Cardiac septum (tissue), 1 donor: ENCODE measurements at regions of chr12 and their contacts with region 1.

Region 1: GRCh38 chr12:131928711-131929580 is at the start of gene PUS1:
- DNase-seq: peak; percentile 97
- total RNA-seq, gene PUS1: 9.9 TPM

Region 2: GRCh38 chr12:131218026-131218922 is 710.7 kb before region 1 on chr12:
- intact Hi-C with region 1: no loop called
- DNase-seq: peak; percentile 70

Region 3: GRCh38 chr12:131840481-131841416 is 88.2 kb before region 1 on chr12:
- intact Hi-C with region 1: no loop called
- DNase-seq: no peak

Region 4: GRCh38 chr12:131912518-131913294 is 16.2 kb before region 1 on chr12:
- intact Hi-C with region 1: loop called (anchors 2 kb)
- DNase-seq: peak; percentile 95

Region 5: DNA sequence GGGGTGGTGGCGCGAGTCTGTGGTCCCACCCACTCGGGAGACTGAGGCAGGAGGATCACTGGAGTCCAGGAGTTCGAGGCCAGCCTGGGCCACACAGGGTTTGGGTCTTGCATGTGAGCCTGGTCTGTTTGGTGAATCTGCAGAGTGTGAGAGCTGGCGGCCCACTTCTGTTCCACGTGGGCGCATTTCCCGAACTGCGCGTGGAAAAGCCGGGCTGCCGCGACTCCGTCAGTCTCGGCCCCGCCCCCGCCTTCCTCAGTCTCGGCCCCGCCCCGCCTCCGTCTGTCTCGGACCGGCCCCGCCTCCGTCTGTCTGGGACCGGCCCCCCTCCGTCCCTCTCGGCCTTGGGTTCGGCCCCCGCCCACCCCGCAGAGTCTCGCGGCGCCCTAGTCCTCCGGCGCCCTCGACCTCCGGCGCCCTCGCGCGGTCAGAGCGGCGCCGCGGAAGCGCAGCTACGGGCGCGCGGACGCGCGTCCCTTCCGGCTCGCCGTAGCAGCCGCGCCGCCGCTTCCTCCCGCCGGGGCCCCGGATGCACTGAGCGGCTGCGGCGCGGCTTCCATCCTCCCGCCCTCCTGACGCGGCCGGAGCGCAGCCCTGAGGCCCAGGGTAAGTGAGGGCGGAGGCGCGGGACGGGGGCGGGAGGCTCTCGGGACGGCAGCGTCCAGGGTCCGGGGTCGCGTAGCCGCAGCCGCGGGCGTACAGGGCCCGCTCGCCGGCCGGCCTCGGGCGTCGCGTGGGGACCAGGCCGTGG is 20.7 kb after region 1 on chr12 and contains the start of gene EP400:
- intact Hi-C with region 1: loop called (anchors 1 kb)
- DNase-seq: peak; percentile 97
- total RNA-seq, gene EP400: 23.1 TPM

Region 6: GRCh38 chr12:131990066-131990979 is 61.4 kb after region 1 on chr12:
- intact Hi-C with region 1: no loop called
- DNase-seq: no peak

Region 7: DNA sequence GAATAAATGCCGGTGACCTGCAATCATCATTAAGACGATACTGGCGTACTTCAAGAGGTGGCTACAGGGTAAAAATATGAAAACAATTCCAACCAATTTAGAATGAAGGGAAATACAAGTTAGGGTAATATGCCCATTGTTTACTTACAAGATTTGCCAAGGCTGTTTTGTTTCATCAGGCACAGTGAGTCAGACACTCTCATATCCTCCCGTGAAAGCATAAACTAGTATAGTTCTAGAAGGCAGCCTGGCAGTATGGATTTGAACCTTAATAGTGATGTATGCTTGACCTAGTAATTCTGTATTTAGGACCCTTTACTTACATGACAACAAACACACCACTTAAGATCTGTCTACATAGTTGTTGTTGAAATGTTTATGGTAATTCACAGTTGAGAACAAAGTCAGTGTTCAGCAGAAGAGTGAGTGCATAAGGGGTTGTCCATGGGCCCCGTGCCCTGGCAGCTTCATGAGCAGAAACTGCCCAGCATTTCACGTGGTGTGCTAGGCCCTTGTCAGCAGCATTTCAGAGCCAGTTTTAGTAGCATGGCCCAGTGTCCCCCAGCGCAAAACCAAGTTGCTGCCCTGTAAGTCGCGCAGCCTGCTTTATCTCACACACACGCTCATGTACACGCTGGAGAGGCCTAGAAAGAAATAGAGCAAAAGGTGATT is 101.6 kb after region 1 on chr12:
- intact Hi-C with region 1: no loop called
- DNase-seq: peak; percentile 84